ENCODE measurements at regions of chr18 and their contacts with region 1.

Region 1: GRCh38 chr18:63339920-63340484 is 20.4 kb upstream of the BCL2 start:
- DNase-seq: peak; percentile 75
- ATAC-seq: peak; percentile 66
- H3K4me3 Mint-ChIP-seq: no peak overlapping the region
- H3K27ac Mint-ChIP-seq: no peak overlapping the region
- H3K4me1 Mint-ChIP-seq: peaks cover 10% of the 10 kb centered on the region
- H3K27me3 Mint-ChIP-seq: no peaks in the 10 kb centered on the region
- CTCF ChIP-seq: peak; percentile 73

Region 2: GRCh38 chr18:63356272-63356896 is 16.4 kb after region 1 on chr18:
- CTCF ChIA-PET with region 1: interaction called, 40 read pairs
- POLR2A ChIA-PET with region 1: no interaction called
- intact Hi-C with region 1: no loop called
- DNase-seq: no peak
- ATAC-seq: no peak
- H3K4me3 Mint-ChIP-seq: no peak overlapping the region
- H3K27ac Mint-ChIP-seq: no peak overlapping the region
- H3K4me1 Mint-ChIP-seq: no peaks in the 10 kb centered on the region
- H3K27me3 Mint-ChIP-seq: no peaks in the 10 kb centered on the region
- CTCF ChIP-seq: no peak

Region 3: DNA sequence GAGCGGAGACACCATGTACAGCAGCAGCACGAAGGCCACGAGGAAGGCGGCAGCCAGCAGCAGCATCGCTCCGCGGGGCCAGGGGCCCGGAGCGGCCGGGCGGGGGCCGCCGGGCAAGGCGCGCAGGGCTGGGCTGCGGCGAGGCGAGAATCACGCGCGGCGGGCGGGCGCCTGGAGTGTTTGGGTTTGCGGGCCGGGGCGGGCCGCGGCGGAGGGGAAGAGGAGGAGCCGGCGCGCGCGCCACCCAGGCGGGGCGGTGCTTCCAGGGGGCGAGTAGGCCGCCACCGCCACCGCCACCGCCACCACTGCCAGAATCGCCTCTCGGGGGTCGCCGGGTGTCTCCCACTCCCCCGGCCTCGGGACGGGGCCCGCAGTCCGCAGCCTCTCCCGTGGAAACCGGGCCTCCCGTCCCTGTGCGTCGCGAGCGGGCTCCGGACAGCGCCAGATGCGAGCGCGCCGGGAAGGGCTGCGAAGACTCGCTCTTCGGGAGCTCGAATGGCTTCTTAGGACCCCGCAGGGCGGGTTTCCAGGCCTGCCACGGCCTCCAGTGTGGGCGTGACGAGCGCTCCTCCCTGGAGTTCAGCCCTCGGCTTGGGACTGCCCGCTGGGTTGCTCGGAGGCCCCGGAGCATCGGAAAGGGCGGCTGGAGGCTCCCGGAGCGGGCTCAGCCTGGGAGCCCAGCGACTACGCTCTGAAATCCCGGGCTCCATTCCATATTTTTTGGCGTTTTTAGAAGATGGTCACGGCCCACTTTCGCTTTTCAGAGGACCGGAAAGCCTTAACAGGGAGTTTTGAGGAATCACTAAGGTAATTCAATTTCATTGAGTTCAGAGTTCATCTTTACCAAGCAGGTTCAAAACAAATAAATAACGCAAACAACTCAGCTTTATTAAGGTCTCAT is 27.3 kb after region 1 on chr18 and contains the start of gene KDSR:
- CTCF ChIA-PET with region 1: interaction called, 23 read pairs
- POLR2A ChIA-PET with region 1: no interaction called
- intact Hi-C with region 1: no loop called
- DNase-seq: peak; percentile 86
- ATAC-seq: peak; percentile 84
- H3K4me3 Mint-ChIP-seq: peak within 1 kb of the TSS; percentile 81
- H3K27ac Mint-ChIP-seq: peak within 1 kb of the TSS; percentile 86
- H3K4me1 Mint-ChIP-seq: peaks cover 29% of the 10 kb centered on the region
- H3K27me3 Mint-ChIP-seq: no peaks in the 10 kb centered on the region
- CTCF ChIP-seq: no peak
- total RNA-seq, gene KDSR: 53.4 TPM

Region 4: GRCh38 chr18:63421514-63421913 is 81.5 kb after region 1 on chr18:
- CTCF ChIA-PET with region 1: no interaction called
- POLR2A ChIA-PET with region 1: no interaction called
- intact Hi-C with region 1: no loop called
- DNase-seq: no peak
- ATAC-seq: no peak
- H3K4me3 Mint-ChIP-seq: peak overlapping the region; percentile 96
- H3K27ac Mint-ChIP-seq: peak overlapping the region; percentile 99
- H3K4me1 Mint-ChIP-seq: peaks cover 25% of the 10 kb centered on the region
- H3K27me3 Mint-ChIP-seq: no peaks in the 10 kb centered on the region
- CTCF ChIP-seq: no peak